ENCODE measurements at regions of chr7 and their contacts with region 1.

Region 1: DNA sequence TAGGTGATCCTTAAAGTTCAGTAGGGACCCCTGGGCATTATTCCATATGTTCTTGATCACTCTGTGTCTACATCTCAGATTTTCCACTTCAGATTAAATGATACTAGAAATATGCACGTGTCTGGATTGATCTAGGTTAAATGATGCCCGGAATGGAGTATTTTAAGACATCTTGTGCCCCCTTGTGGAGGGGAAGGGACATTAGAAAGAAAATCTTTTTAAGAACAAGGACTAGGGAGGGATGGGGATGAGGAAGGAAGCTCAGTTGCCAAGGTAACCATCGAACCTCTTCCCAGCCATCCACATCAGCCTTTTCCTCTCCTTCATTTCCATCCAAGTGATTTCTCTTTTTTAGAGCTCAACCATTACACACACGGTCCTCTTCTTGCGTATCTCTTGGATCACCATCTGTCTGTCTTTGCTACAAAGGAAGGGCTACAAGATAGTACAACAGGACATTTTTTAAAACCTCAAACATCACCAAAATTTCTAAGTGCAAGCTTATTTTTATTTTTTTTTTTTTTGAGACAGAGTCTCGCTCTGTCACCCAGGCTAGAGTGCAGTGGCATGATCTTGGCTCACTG is 40.5 kb downstream of the PRSS2 start:
- DNase-seq: peak; percentile 58
- H3K4me3 Mint-ChIP-seq: no peak overlapping the region
- H3K27ac Mint-ChIP-seq: no peak overlapping the region
- H3K4me1 Mint-ChIP-seq: no peaks in the 10 kb centered on the region
- H3K27me3 Mint-ChIP-seq: peaks cover 79% of the 10 kb centered on the region
- CTCF ChIP-seq: peak; percentile 63

Region 2: GRCh38 chr7:141874787-141875186 is 936.5 kb before region 1 on chr7:
- CTCF ChIA-PET with region 1: no interaction called
- POLR2A ChIA-PET with region 1: no interaction called
- intact Hi-C with region 1: no loop called
- DNase-seq: peak; percentile 29
- H3K4me3 Mint-ChIP-seq: no peak overlapping the region
- H3K27ac Mint-ChIP-seq: no peak overlapping the region
- H3K4me1 Mint-ChIP-seq: no peaks in the 10 kb centered on the region
- H3K27me3 Mint-ChIP-seq: no peaks in the 10 kb centered on the region
- CTCF ChIP-seq: no peak

Region 3: DNA sequence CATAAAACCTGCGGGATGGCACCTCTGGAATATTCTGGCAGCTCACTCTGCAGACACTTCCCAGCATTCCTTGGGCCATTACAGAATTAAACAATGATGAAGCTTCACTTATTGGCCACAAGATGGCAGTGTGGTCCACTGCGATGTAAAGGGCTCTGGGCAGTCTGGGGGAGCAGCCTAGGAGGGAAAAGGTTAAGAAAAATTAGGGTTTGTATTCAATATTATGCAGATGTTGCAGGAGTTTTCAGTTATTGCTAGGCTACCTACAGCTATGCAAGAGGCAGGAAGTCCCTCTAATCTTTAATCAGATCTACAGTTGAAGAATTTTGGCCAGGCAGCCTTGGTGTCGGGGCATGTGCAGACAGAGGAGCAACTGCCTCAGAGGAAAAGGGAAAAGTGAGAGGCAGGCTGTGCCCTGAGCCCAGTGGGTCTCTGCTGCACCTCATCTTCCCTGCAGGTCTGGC is 295.2 kb before region 1 on chr7:
- CTCF ChIA-PET with region 1: interaction called, 11 read pairs
- POLR2A ChIA-PET with region 1: no interaction called
- intact Hi-C with region 1: no loop called
- DNase-seq: peak; percentile 81
- H3K4me3 Mint-ChIP-seq: no peak overlapping the region
- H3K27ac Mint-ChIP-seq: no peak overlapping the region
- H3K4me1 Mint-ChIP-seq: peaks cover 20% of the 10 kb centered on the region
- H3K27me3 Mint-ChIP-seq: no peaks in the 10 kb centered on the region
- CTCF ChIP-seq: peak; percentile 80

Region 4: DNA sequence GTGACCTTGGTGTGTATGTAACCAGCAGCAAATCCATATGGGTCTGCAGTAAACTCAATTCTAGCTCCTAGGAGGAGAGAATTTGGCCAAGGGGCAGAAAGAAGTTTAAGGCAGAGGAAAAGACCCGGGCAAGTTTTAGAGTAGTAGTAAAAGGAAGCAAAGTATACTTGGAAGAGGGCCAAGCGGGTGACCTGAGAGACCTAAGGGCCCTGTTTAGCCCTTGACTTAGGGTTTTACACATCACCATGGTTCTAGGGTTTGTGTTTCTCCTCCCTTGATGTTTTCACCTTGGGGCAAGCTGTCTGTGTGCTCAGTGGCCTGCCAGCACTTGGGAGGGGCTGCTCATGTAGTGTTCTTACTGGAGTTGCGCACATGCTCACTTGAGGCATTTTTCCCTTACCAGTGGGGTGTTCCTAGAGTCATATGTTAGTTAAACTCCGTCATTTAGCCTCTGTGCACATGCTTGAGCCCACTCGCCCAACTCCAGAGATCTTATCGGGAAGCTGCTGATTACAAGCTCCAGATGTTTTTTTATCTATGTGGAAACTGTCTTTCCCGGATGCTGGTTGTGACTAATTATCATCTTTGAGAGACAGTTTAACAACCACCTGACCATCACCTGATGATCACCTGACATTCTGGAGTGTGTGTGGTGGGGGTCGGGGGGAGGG is 199.5 kb before region 1 on chr7:
- CTCF ChIA-PET with region 1: interaction called, 20 read pairs
- POLR2A ChIA-PET with region 1: no interaction called
- intact Hi-C with region 1: no loop called
- DNase-seq: no peak
- H3K4me3 Mint-ChIP-seq: no peak overlapping the region
- H3K27ac Mint-ChIP-seq: no peak overlapping the region
- H3K4me1 Mint-ChIP-seq: peaks cover 11% of the 10 kb centered on the region
- H3K27me3 Mint-ChIP-seq: no peaks in the 10 kb centered on the region
- CTCF ChIP-seq: no peak

Region 5: GRCh38 chr7:142632291-142633134 is 178.7 kb before region 1 on chr7:
- CTCF ChIA-PET with region 1: interaction called, 61 read pairs
- POLR2A ChIA-PET with region 1: no interaction called
- intact Hi-C with region 1: loop called (anchors 1 kb)
- DNase-seq: peak; percentile 75
- H3K4me3 Mint-ChIP-seq: no peak overlapping the region
- H3K27ac Mint-ChIP-seq: no peak overlapping the region
- H3K4me1 Mint-ChIP-seq: peaks cover 11% of the 10 kb centered on the region
- H3K27me3 Mint-ChIP-seq: peaks cover 14% of the 10 kb centered on the region
- CTCF ChIP-seq: peak; percentile 61

Region 6: GRCh38 chr7:142771353-142771723 is 39.9 kb before region 1 on chr7:
- CTCF ChIA-PET with region 1: interaction called, 12 read pairs
- POLR2A ChIA-PET with region 1: no interaction called
- intact Hi-C with region 1: no loop called
- DNase-seq: peak; percentile 30
- H3K4me3 Mint-ChIP-seq: no peak overlapping the region
- H3K27ac Mint-ChIP-seq: no peak overlapping the region
- H3K4me1 Mint-ChIP-seq: peaks cover 13% of the 10 kb centered on the region
- H3K27me3 Mint-ChIP-seq: peaks cover 63% of the 10 kb centered on the region
- CTCF ChIP-seq: no peak

Region 7: DNA sequence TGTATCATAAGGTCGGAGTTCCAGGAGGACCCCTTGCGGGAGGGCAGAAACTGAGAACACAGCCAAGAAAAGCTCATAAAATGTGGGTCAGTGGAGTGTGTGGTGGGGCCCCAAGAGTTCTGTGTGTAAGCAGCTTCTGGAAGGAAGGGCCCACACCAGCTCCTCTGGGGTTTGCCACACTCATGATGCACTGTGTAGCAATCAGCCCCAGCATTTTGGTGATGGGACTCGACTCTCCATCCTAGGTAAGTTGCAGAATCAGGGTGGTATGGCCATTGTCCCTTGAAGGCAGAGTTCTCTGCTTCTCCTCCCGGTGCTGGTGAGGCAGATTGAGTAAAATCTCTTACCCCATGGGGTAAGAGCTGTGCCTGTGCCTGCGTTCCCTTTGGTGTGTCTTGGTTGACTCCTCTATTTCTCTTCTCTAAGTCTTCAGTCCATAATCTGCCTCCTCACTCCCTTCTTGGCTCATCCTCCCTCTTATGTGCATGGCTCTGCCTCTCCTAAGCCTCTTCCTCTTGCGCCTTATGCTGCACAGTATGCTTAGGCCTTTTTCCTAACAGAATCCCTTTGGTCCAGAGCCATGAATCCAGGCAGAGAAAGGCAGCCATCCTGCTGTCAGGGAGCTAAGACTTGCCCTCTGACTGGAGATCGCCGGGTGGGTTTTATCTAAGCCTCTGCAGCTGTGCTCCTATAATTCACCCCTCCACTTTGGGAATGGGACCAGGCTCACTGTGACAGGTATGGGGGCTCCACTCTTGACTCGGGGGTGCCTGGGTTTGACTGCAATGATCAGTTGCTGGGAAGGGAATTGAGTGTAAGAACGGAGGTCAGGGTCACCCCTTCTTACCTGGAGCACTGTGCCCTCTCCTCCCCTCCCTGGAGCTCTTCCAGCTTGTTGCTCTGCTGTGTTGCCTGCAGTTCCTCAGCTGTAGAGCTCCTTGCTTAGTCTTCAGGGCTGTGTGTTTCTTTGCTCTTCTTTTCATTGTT is 22.6 kb before region 1 on chr7:
- CTCF ChIA-PET with region 1: interaction called, 32 read pairs
- POLR2A ChIA-PET with region 1: no interaction called
- intact Hi-C with region 1: loop called (anchors 2 kb)
- DNase-seq: no peak
- H3K4me3 Mint-ChIP-seq: no peak overlapping the region
- H3K27ac Mint-ChIP-seq: no peak overlapping the region
- H3K4me1 Mint-ChIP-seq: peaks cover 5% of the 10 kb centered on the region
- H3K27me3 Mint-ChIP-seq: peaks cover 31% of the 10 kb centered on the region
- CTCF ChIP-seq: no peak

Region 8: DNA sequence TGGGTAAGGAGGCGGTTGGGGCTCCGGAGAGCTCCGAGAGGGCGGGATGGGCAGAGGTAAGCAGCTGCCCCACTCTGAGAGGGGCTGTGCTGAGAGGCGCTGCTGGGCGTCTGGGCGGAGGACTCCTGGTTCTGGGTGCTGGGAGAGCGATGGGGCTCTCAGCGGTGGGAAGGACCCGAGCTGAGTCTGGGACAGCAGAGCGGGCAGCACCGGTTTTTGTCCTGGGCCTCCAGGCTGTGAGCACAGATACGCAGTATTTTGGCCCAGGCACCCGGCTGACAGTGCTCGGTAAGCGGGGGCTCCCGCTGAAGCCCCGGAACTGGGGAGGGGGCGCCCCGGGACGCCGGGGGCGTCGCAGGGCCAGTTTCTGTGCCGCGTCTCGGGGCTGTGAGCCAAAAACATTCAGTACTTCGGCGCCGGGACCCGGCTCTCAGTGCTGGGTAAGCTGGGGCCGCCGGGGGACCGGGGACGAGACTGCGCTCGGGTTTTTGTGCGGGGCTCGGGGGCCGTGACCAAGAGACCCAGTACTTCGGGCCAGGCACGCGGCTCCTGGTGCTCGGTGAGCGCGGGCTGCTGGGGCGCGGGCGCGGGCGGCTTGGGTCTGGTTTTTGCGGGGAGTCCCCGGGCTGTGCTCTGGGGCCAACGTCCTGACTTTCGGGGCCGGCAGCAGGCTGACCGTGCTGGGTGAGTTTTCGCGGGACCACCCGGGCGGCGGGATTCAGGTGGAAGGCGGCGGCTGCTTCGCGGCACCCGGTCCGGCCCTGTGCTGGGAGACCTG is 14.4 kb before region 1 on chr7:
- CTCF ChIA-PET with region 1: interaction called, 19 read pairs
- POLR2A ChIA-PET with region 1: no interaction called
- intact Hi-C with region 1: no loop called
- DNase-seq: no peak
- H3K4me3 Mint-ChIP-seq: no peak overlapping the region
- H3K27ac Mint-ChIP-seq: no peak overlapping the region
- H3K4me1 Mint-ChIP-seq: peaks cover 11% of the 10 kb centered on the region
- H3K27me3 Mint-ChIP-seq: peaks cover 77% of the 10 kb centered on the region
- CTCF ChIP-seq: no peak

Region 9: DNA sequence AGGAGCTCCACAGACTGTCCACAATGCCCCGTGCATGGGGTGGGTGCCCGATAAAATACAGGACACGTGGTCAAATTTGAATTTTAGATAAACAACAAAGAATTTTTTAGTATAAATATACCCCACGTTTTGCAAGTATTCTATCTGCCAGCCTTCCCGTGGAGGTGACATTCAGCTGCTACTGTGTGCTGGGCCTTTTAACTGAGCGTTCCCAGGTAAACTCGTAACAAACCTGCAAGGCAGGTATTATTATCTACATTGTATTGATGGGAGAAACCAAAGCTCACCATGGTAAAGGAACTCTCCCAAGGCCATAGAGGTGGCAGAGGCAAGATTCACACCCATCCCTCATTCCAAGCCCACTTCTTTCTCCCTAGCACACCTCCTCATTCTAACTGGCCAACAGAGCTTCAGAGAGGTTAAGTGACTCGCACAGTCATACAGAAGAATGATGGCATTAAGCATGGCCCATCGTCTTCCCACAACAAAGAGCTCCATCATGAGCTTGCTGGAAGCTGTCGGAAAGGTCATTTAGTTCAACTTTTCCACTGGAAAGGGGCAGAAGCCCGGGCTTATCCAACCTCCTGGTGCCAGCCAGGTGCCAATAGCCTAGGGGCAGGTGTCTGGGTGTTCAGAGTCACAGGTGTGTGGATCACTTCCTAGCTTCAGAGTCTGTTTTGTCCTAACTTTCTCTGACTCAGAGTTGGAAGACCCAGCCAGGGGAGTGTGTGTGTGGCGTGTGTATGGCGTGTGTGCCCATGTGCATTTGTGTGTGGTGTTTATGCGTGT is 75.4 kb after region 1 on chr7:
- CTCF ChIA-PET with region 1: no interaction called
- POLR2A ChIA-PET with region 1: no interaction called
- intact Hi-C with region 1: no loop called
- DNase-seq: peak; percentile 73
- H3K4me3 Mint-ChIP-seq: no peak overlapping the region
- H3K27ac Mint-ChIP-seq: no peak overlapping the region
- H3K4me1 Mint-ChIP-seq: no peaks in the 10 kb centered on the region
- H3K27me3 Mint-ChIP-seq: peaks cover 19% of the 10 kb centered on the region
- CTCF ChIP-seq: no peak